Right cardiac atrium (tissue), 5 donors: ENCODE measurements at regions of chr17 and their contacts with region 1.

Region 1: GRCh38 chr17:63919311-63919723 is 678 bp upstream of the GH1 start:
- DNase-seq: peak; percentile 51 to 63 (median 56)
- ATAC-seq: peak; percentile 80 to 88
- H3K4me3 ChIP-seq: no peak overlapping the region
- H3K27ac ChIP-seq: no peak overlapping the region
- H3K4me1 ChIP-seq: no peaks in the 10 kb centered on the region
- H3K27me3 ChIP-seq: no peaks in the 10 kb centered on the region

Region 2: DNA sequence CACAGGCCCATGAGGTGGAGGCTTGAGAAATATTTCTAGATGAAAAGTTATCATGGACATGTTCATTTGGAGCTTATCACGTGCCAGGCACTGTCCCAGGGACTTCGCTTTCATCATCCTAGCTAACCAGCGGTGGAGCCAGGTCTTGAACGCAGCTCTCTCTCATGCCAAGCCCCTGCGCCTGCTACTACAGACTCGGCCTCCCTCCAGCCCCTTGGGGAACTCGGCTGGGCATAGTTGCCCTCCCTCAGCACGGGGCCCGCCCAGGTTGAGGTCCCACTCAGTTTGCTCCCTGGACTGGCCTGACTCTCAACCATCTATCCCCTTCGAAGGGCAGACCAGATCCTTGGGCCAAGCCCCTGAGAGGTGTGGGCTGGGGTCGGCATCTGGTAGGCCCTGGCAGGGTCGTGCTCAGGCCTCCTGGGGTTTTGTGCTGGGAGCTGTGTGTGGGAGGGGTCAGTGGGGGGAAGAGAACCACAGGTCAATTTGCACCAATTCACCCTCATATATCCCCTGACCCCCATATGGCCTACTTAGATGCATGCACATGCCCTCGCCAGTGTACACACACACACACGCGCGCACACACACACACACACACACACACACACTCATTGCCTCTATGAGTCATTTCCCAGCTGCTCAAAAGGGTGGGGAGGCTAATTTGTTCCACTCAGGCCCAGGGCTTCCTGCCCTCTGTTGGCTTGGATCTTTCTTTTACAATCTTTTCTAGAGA is 65.5 kb after region 1 on chr17:
- intact Hi-C with region 1: loop called (anchors 2 to 10 kb)
- DNase-seq: peak in 2 of 3 donors; percentile 60 to 63
- ATAC-seq: peak; percentile 53 to 70
- H3K4me3 ChIP-seq: no peak overlapping the region
- H3K27ac ChIP-seq: peak overlapping the region; percentile 0
- H3K4me1 ChIP-seq: peaks cover 8% of the 10 kb centered on the region
- H3K27me3 ChIP-seq: no peaks in the 10 kb centered on the region

Region 3: GRCh38 chr17:63998050-63998720 is 78.9 kb after region 1 on chr17 and contains the start of gene PRR29:
- intact Hi-C with region 1: loop called in 2 of 4 experiments (anchors 5 to 10 kb)
- DNase-seq: peak; percentile 85 to 92 (median 90)
- ATAC-seq: peak; percentile 59 to 62
- H3K4me3 ChIP-seq: peak within 1 kb of the TSS; percentile 46
- H3K27ac ChIP-seq: no peak within 1 kb of the TSS
- H3K4me1 ChIP-seq: peaks cover 5% of the 10 kb centered on the region
- H3K27me3 ChIP-seq: no peaks in the 10 kb centered on the region
- total RNA-seq, gene PRR29: 0.11 to 0.25 (median 0.15) TPM in 3 of 4 donors, not detected in the other

Region 4: DNA sequence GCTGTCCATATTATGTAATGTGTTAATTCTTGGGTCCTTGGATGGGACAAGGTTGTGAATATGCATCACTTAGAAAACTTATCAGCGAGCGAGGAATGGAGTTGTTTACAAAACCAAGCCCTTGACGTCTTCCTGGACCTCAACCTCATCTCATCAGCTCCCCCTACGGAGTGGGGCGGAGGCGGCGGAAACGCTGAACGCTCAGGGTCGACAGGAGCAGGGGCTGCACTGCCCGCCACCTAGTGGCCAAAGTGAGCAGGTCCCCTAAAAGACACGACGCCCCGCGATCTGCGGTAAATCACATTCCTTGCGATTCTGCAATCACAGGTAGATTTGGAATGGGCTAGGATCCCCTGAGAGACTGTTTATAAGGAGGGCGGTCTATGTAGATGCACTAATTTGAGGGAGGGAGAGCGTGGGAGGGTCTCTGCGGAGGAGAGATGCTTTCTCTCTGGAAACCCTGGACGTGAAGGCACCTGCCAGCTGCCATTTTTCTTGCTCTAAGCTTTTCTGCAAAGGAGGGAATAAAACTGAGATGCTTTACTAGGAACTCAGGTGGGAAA is 106.5 kb after region 1 on chr17:
- intact Hi-C with region 1: loop called (anchors 5 to 10 kb)
- DNase-seq: peak; percentile 84 to 93 (median 92)
- ATAC-seq: peak; percentile 69 to 82
- H3K4me3 ChIP-seq: no peak overlapping the region
- H3K27ac ChIP-seq: no peak overlapping the region
- H3K4me1 ChIP-seq: peaks cover 3% of the 10 kb centered on the region
- H3K27me3 ChIP-seq: no peaks in the 10 kb centered on the region

Region 5: DNA sequence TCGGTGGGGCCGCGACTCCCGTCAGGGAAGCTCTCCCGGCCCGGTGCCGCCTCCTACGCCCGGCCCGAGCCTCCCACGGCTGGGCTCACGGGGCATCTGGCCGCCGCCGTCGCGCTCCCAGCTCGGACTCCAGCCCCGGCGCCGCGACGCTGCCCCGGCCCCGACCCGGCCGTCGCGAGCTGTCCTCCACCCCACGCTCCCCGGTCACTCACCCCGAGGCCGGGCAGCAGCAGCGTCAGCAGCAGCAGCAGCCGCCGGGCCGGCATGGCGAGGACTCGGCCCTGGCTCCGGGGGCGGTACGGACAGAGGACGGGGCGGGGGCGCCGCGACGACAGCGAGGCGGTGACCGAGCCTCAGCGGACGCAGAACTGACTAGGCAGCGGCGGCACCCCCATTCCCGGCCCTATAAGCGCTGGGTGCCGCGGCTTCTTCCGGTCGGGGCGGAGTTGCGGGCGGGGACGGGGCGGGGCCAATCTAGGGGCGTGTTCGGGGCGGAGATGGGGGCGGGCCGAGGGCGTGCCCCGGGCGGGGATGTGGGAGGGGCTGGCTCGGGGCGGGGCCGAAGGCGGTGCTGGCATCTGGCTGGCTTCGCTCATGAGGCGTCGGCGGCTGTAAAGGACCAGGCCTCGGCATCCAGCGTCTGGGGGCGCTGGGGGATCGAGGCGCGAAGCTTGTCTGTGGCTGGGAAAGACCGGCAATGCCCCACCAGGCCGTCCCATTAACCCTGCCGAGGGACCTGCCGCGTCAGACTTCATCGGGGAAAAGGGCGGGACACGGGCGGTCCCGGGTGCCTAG is 210.6 kb after region 1 on chr17 and contains the start of gene ERN1:
- intact Hi-C with region 1: loop called in 3 of 4 experiments (anchors 5 to 10 kb)
- DNase-seq: peak; percentile 96 to 98 (median 98)
- ATAC-seq: peak; percentile 98
- H3K4me3 ChIP-seq: peak within 1 kb of the TSS; percentile 86
- H3K27ac ChIP-seq: peak within 1 kb of the TSS; percentile 90
- H3K4me1 ChIP-seq: no peaks in the 10 kb centered on the region
- H3K27me3 ChIP-seq: no peaks in the 10 kb centered on the region
- total RNA-seq, gene ERN1: 8.9 to 11.4 (median 10.0) TPM